Caco-2 (cell line): ENCODE measurements at regions of chr1 and their contacts with region 1.

Region 1: DNA sequence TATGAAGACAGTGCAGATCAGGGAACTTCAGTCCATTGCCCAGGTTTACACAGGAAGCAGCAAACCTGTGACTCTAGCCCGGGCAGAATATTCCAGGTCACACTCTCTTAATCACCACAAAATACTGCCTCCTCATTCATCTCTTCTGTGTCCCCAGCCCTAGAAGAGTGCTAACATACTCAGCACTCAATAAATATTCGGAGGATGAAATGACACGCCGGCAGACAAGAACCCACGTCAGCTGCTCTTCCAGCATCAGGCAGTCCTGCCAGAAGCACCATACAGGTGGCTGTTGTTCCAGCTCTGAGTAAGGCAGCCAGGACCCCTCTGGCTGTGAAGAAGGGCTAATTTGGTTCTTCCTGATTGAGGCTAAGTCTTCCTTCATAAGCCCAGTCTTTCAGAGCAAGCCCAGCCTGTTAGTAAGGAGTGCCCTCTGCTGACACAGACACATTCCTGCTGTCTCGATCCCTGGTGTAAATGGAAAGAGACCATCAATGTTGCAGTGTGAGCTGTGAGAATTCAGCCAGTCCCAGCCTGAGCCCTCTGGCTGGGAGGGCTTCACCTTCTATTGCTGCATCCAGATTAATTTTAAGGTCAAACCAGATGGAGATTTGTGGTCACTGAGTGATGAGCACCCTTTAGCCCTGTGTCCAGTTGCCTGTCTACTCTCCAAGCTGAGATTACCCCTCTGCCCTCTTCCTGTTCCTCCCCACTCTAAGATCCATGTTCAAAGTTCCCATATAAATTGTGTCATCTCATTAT is 45.0 kb upstream of the KIRREL1 start:
- DNase-seq: peak; percentile 52 to 61
- H3K4me3 ChIP-seq: no peak overlapping the region
- H3K4me3 Mint-ChIP-seq: no peak overlapping the region
- H3K27ac Mint-ChIP-seq: no peak overlapping the region
- H3K4me1 ChIP-seq: peaks cover 34% of the 10 kb centered on the region
- H3K4me1 Mint-ChIP-seq: peaks cover 20% of the 10 kb centered on the region
- H3K27me3 ChIP-seq: no peaks in the 10 kb centered on the region
- H3K27me3 Mint-ChIP-seq: no peaks in the 10 kb centered on the region
- CTCF ChIP-seq: peak; percentile 62 to 90

Region 2: DNA sequence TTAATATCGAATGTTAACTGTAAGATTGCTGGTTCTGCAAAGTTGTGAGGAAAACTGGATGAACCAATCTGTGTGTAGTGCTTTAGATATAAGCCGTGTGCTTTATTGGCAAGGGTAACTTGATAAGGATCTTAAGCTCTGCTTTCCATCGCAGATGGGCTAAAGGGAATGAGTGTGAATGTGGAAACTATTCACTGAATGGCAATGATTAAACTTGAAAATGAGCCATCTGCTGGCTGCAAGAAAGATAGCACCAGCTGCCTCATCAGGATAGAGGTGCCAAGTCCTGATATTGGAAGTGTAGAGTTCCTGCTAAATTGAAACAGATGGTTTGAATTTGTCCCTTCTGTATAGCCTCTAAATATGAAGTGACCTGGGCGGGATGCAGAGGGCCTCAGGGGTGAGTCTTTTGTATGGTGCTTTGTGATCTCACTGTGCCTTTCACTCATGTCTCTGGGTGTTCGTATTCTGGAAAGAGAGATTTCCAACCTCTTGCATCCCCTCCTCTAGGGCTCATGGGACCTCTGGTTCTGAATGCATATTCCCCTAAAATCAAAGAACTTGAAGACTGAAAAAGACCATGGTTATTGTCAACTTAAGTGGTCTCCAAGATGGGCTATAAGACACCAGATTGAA is 257.1 kb before region 1 on chr1:
- CTCF ChIA-PET with region 1: no interaction called
- POLR2A ChIA-PET with region 1: no interaction called
- intact Hi-C with region 1: loop called (anchors 5 kb)
- DNase-seq: peak in 1 of 2 experiments; percentile 30
- H3K4me3 ChIP-seq: no peak overlapping the region
- H3K4me3 Mint-ChIP-seq: no peak overlapping the region
- H3K27ac Mint-ChIP-seq: no peak overlapping the region
- H3K4me1 ChIP-seq: no peaks in the 10 kb centered on the region
- H3K4me1 Mint-ChIP-seq: no peaks in the 10 kb centered on the region
- H3K27me3 ChIP-seq: no peaks in the 10 kb centered on the region
- H3K27me3 Mint-ChIP-seq: peaks cover 10% of the 10 kb centered on the region
- CTCF ChIP-seq: peak; percentile 56 to 64

Region 3: GRCh38 chr1:157770442-157771043 is 177.9 kb before region 1 on chr1:
- CTCF ChIA-PET with region 1: no interaction called
- POLR2A ChIA-PET with region 1: no interaction called
- intact Hi-C with region 1: loop called (anchors 1 kb)
- DNase-seq: no peak
- H3K4me3 ChIP-seq: no peak overlapping the region
- H3K4me3 Mint-ChIP-seq: no peak overlapping the region
- H3K27ac Mint-ChIP-seq: no peak overlapping the region
- H3K4me1 ChIP-seq: no peaks in the 10 kb centered on the region
- H3K4me1 Mint-ChIP-seq: no peaks in the 10 kb centered on the region
- H3K27me3 ChIP-seq: no peaks in the 10 kb centered on the region; the same call in 1 of the 2 replicates
- H3K27me3 Mint-ChIP-seq: peaks cover 10% of the 10 kb centered on the region
- CTCF ChIP-seq: peak in 1 of 2 experiments; percentile 6

Region 4: DNA sequence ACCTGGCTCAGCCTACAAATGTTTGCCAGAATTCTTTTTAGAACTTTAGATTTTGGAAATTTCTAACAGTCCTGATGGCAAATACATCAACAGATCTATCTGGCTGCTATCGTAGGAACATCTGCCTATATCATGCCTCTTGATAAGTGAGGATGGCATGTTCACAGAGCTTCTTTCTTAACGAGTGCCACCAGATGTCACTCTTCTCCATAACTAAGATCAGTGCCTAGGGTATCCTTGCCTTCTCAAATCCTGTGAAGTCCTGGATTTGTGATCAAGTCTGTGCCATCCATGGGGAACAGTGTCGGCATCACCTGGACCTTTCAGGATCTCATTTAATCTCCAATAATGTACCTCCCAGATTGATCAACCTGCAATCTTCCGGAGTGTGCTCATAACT is 70.4 kb before region 1 on chr1:
- CTCF ChIA-PET with region 1: interaction called, 21 read pairs
- POLR2A ChIA-PET with region 1: no interaction called
- intact Hi-C with region 1: loop called (anchors 1 kb)
- DNase-seq: peak in 1 of 2 experiments; percentile 35
- H3K4me3 ChIP-seq: no peak overlapping the region
- H3K4me3 Mint-ChIP-seq: no peak overlapping the region
- H3K27ac Mint-ChIP-seq: no peak overlapping the region
- H3K4me1 ChIP-seq: no peaks in the 10 kb centered on the region
- H3K4me1 Mint-ChIP-seq: no peaks in the 10 kb centered on the region
- H3K27me3 ChIP-seq: no peaks in the 10 kb centered on the region
- H3K27me3 Mint-ChIP-seq: peaks cover 9% of the 10 kb centered on the region
- CTCF ChIP-seq: peak; percentile 54 to 61

Region 5: GRCh38 chr1:158873141-158873540 is 924.6 kb after region 1 on chr1:
- CTCF ChIA-PET with region 1: no interaction called
- POLR2A ChIA-PET with region 1: no interaction called
- intact Hi-C with region 1: no loop called
- DNase-seq: no peak
- H3K4me3 ChIP-seq: no peak overlapping the region
- H3K4me3 Mint-ChIP-seq: no peak overlapping the region
- H3K27ac Mint-ChIP-seq: no peak overlapping the region
- H3K4me1 ChIP-seq: no peaks in the 10 kb centered on the region
- H3K4me1 Mint-ChIP-seq: no peaks in the 10 kb centered on the region
- H3K27me3 ChIP-seq: no peaks in the 10 kb centered on the region
- H3K27me3 Mint-ChIP-seq: peaks cover 6% of the 10 kb centered on the region
- CTCF ChIP-seq: no peak